Activated T-helper 1 cell treated with anti-CD3 and anti-CD28 coated beads, Interleukin-12 subunit alpha, Interleukin-12 subunit beta, Interleukin-2, Interleukin-4 antibody, amounts not matched to agents 30 ng/mL and 10 ng/mL and 1 ng/mL, durations not matched to agents 14 hours and 24 hours and 36 hours (primary cell): ENCODE measurements at regions of chr15 and their contacts with region 1.

Region 1: GRCh38 chr15:74540761-74541493 is at the start of gene ARID3B:
- DNase-seq: peak; percentile 91
- H3K4me3 Mint-ChIP-seq: peak within 1 kb of the TSS; percentile 94
- H3K27ac Mint-ChIP-seq: peak within 1 kb of the TSS; percentile 96
- H3K4me1 Mint-ChIP-seq: peaks cover 56% of the 10 kb centered on the region
- H3K27me3 Mint-ChIP-seq: no peaks in the 10 kb centered on the region
- total RNA-seq, gene ARID3B: 48.8 and 53.6 TPM in 2 replicates

Region 2: DNA sequence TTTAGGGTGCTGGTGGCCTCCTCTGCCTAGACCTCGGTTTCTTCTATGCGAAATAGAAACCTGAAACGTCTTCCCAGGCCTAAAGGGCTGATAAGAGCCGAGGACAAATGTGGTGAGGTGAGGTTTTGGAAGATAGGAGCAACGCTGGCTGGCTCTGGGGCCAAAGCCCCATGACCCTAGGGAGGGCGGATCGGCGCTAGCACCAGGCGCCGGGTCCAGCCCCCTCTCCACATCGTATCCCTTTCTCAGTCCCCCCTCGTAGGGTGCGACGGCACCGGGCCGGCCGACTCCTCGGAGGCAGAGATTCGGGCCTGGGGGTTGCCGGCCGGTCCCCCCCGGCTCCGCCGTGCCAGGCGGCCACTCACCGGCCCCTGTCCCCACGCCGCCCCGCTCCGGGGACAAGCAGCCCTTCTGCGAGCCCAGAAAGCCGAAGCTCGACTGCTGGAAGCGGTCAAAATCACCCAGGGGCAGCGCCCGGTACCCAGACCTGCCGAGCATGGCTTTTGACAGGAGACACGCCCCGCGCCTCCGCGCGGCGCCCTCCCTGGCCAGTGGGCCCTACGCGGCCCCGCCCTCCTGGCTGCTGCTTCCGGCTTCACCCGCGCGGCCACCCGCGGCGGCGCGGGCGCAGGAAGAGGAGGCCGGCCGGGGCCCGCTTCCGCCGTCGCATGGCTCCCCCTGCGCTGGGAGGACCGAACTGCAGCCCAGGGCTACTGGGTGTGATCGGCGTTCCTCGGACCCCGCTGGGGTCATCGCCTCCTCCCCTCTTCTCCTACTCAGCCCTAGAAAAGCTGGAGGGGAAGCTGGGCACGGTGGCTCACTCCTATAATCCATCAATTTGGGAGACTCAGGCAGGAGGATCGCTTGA is 549.0 kb before region 1 on chr15 and contains the start of gene STOML1:
- intact Hi-C with region 1: loop called (anchors 5 kb)
- DNase-seq: peak; percentile 96
- H3K4me3 Mint-ChIP-seq: peak within 1 kb of the TSS; percentile 89
- H3K27ac Mint-ChIP-seq: peak within 1 kb of the TSS; percentile 85
- H3K4me1 Mint-ChIP-seq: peaks cover 49% of the 10 kb centered on the region
- H3K27me3 Mint-ChIP-seq: no peaks in the 10 kb centered on the region
- total RNA-seq, gene STOML1: 10.6 and 11.6 TPM in 2 replicates

Region 3: DNA sequence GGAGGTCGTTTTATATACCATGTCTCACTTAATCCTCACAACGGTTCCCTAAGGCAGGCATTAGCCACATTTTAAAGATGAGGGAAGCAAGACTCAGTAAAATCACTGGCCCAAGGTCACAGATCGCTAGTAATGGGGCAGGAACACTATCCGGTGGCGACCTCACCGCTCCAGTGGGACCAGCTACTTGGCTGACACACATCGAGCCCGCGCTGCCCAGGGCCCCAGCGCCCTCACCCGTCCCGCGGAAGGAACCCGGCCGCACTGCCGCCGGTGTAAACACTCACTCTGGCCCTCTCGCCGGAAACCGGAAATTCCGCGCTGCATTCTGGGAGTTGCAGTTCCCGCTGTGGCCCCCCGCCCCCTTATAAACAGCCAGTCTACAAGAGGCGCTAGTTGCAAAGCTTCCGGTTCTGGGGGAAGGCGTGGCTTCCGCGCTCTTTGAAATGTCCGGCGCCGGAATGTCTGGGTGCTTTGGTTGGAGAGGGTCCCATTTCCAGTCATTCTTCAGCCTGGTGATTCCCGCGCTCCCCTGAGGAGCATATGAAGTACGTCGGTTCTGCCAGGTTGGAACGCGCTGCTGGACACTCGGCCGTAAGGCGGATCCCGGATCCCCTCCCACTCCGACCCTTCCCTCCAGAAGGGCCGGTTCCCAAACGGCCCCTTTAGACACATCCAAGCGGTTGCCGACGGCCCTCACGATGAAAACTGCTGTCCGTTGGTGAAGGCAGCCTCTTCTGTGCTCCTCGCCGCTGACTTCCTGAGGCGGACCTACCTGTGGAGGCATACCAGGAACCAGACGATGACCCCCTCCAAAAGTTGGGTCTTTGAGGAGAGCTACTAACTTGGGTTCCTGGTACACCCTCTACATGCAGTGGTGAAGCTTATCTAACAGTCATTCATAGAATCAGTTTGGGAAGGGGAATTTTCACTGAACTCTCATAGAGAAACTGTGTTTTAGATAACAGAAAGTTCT is 79.8 kb before region 1 on chr15 and contains the start of gene UBL7:
- intact Hi-C with region 1: loop called (anchors 1 kb)
- DNase-seq: peak; percentile 96
- H3K4me3 Mint-ChIP-seq: peak within 1 kb of the TSS; percentile 97
- H3K27ac Mint-ChIP-seq: peak within 1 kb of the TSS; percentile 94
- H3K4me1 Mint-ChIP-seq: peaks cover 56% of the 10 kb centered on the region
- H3K27me3 Mint-ChIP-seq: no peaks in the 10 kb centered on the region
- total RNA-seq, gene UBL7: 55.4 and 56.0 TPM in 2 replicates

Region 4: GRCh38 chr15:74497584-74497983 is 43.3 kb before region 1 on chr15:
- intact Hi-C with region 1: no loop called
- DNase-seq: no peak
- H3K4me3 Mint-ChIP-seq: no peak overlapping the region
- H3K27ac Mint-ChIP-seq: no peak overlapping the region
- H3K4me1 Mint-ChIP-seq: no peaks in the 10 kb centered on the region
- H3K27me3 Mint-ChIP-seq: no peaks in the 10 kb centered on the region

Region 5: GRCh38 chr15:74552773-74553441 is 12.0 kb after region 1 on chr15:
- intact Hi-C with region 1: loop called (anchors 1 kb)
- DNase-seq: no peak
- H3K4me3 Mint-ChIP-seq: peak overlapping the region; percentile 62
- H3K27ac Mint-ChIP-seq: peak overlapping the region; percentile 84
- H3K4me1 Mint-ChIP-seq: peaks cover 73% of the 10 kb centered on the region
- H3K27me3 Mint-ChIP-seq: no peaks in the 10 kb centered on the region

Region 6: GRCh38 chr15:74695597-74696397 is 154.9 kb after region 1 on chr15 and contains the start of gene EDC3:
- intact Hi-C with region 1: loop called (anchors 1 kb)
- DNase-seq: peak; percentile 80
- H3K4me3 Mint-ChIP-seq: peak within 1 kb of the TSS; percentile 100
- H3K27ac Mint-ChIP-seq: peak within 1 kb of the TSS; percentile 100
- H3K4me1 Mint-ChIP-seq: peaks cover 40% of the 10 kb centered on the region
- H3K27me3 Mint-ChIP-seq: peaks cover 2% of the 10 kb centered on the region
- total RNA-seq, gene EDC3: 58.4 and 61.4 TPM in 2 replicates

Region 7: DNA sequence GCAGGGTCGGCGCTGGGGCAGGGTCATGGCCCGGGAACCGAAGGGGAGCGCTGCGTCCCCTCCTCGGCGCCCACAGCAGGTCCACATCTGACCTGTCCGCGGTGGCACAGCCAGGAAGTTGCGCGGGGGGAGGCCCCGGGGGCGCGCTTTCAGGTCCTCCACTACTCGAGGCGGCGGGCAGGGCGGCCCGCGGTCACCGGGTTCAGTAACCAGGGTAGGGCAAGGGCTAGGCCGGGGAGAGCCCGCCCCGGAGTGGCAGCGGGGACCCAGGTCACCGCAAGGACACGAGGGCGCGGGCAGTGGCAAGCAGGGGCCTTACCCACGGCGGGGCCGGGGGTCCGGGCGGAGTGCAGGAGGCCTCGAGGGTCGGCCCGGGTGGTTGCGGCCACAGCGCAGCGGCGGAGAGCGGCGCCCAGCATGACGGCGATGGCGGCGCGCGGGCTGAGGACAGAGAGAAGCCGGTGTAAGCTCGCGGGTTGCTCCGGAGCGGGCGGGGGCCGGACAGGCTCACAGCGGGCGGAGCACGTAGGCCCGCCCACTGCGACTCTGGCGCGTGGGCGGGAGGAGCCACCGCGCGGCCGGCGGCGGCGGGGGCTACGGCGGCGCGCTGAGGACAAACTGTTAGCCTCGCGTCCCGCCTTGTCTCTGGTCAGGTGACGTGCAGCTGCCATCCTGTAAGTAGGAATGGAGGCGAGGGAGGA is 396.8 kb after region 1 on chr15 and contains the start of gene COX5A:
- intact Hi-C with region 1: loop called (anchors 5 kb)
- DNase-seq: peak; percentile 91
- H3K4me3 Mint-ChIP-seq: peak within 1 kb of the TSS; percentile 91
- H3K27ac Mint-ChIP-seq: peak within 1 kb of the TSS; percentile 91
- H3K4me1 Mint-ChIP-seq: peaks cover 22% of the 10 kb centered on the region
- H3K27me3 Mint-ChIP-seq: no peaks in the 10 kb centered on the region
- total RNA-seq, gene COX5A: 273 and 290 TPM in 2 replicates